Activated T-helper 2 cell treated with anti-CD3 and anti-CD28 coated beads, Interferon-gamma antibody, Interleukin-2, Interleukin-4, amounts not matched to agents 10 μg/mL and 5 μg/mL and 100 μg/mL, durations not matched to agents 14 hours and 24 hours and 36 hours (primary cell): ENCODE measurements at regions of chr6 and their contacts with region 1.

Region 1: DNA sequence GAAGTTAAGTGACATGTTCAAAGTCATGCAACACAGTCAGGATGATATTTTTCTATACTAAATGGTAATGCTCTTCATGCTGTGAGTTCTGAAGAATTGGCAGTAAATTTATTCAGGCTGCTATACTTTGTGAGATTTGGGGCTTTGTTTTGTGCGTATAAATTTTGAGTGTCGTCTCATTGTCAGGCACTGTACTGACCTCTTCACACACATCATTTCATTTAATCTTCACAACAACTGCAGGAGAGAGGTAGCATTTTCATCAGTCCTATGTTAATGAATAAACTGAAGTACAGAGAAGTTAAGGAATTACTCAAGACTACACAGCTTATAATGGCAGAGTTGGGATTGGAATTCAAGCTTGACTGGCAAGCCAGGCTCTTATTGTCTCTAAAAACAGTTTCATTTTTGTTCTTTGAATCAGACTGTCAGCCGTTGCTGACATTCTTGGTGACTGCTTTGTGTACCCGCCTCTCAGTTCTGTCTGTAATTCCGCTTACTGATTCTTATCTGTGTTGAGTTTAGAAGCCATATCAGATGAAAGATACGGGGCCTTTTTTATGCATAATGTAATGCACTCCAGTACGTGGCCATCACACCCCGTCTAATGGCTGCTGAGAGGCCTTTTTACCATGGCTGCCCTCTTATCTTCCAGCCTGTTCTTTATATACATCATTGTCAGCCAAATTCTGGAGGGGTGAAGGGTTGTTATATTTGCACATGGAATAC is 274.9 kb downstream of the UTRN start:
- DNase-seq: peak; percentile 56
- H3K4me3 Mint-ChIP-seq: peak overlapping the region; percentile 60
- H3K27ac Mint-ChIP-seq: peak overlapping the region; percentile 86
- H3K4me1 Mint-ChIP-seq: peaks cover 36% of the 10 kb centered on the region
- H3K27me3 Mint-ChIP-seq: no peaks in the 10 kb centered on the region

Region 2: DNA sequence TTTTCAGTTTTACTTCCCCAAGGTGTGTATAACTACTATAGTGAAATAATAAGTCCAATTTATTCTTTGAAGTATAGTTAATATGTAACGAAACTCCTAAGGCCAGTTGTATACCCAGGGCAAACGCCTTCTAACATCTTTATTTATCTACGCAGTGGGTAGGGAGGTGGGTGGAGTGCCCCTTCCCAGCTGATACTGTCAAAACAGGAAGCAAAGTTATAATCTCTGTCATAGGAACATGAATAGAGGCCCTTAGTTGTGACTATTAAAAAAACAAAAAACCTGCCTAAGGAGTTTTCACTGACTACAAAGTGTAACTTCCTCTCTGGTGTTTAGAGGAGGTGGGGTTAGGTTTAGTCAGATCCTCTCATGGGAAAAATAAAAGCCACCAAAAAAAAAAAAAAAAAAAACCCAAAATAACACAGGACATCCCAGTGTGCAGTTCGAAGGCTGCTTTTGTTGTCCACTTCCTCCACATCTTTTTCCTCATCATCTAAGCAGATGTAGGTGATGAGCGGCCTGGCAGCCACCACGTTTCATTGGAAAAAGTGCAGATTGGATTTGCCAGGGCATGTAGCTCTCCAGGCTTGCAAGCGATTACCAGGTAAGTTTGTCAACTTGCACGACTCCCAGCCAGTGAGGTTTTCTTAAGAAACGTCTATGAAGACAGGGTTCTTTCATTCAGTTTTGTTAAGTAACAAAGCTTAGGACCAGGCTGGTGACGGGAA is 216.2 kb before region 1 on chr6:
- intact Hi-C with region 1: loop called (anchors 2 kb)
- DNase-seq: peak; percentile 44
- H3K4me3 Mint-ChIP-seq: peak overlapping the region; percentile 93
- H3K27ac Mint-ChIP-seq: peak overlapping the region; percentile 99
- H3K4me1 Mint-ChIP-seq: peaks cover 67% of the 10 kb centered on the region
- H3K27me3 Mint-ChIP-seq: no peaks in the 10 kb centered on the region

Region 3: GRCh38 chr6:144528743-144529425 is 31.1 kb before region 1 on chr6:
- intact Hi-C with region 1: no loop called
- DNase-seq: no peak
- H3K4me3 Mint-ChIP-seq: no peak overlapping the region
- H3K27ac Mint-ChIP-seq: no peak overlapping the region
- H3K4me1 Mint-ChIP-seq: peaks cover 1% of the 10 kb centered on the region
- H3K27me3 Mint-ChIP-seq: no peaks in the 10 kb centered on the region

Region 4: DNA sequence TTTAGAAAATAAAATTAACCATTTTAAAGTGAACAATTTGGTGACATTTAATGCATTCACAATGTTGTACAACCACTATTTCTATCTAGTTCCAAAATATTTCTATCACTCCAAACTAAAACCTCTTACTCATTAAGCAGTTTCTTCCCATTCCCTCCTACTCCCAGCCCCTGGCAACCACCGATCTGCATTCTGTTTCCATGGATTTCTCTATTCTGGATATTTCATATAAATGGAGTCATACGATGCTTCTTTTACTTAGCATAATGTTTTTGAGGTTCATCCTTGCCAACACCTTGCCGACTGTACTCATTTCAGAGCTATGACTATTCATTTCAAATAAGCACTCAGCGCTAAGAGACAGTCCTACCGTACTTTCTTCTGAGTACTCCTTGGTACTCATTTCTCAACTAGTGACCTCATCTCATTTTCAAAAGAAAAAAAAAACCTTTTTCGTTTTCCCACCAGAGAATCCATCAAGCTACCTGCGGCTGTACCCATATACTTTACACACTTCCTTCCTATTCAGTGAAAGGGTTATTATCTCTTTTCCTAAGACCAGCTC is 15.7 kb before region 1 on chr6:
- intact Hi-C with region 1: loop called (anchors 1 kb)
- DNase-seq: no peak
- H3K4me3 Mint-ChIP-seq: no peak overlapping the region
- H3K27ac Mint-ChIP-seq: peak overlapping the region; percentile 25
- H3K4me1 Mint-ChIP-seq: peaks cover 15% of the 10 kb centered on the region
- H3K27me3 Mint-ChIP-seq: no peaks in the 10 kb centered on the region